ENCODE measurements at regions of chr2 and their contacts with region 1.

Region 1: GRCh38 chr2:66566726-66567399 is 131.9 kb downstream of the MEIS1 start:
- DNase-seq: no peak
- ATAC-seq: no peak
- H3K4me3 ChIP-seq: no peak overlapping the region
- H3K4me3 Mint-ChIP-seq: no peak overlapping the region
- H3K27ac ChIP-seq: no peak overlapping the region
- H3K27ac Mint-ChIP-seq: no peak overlapping the region
- H3K4me1 ChIP-seq: no peaks in the 10 kb centered on the region
- H3K4me1 Mint-ChIP-seq: peaks cover 0 to 6% of the 10 kb centered on the region in 2 donors
- H3K27me3 ChIP-seq: no peaks in the 10 kb centered on the region
- H3K27me3 Mint-ChIP-seq: peaks cover 4 to 11% of the 10 kb centered on the region in 2 donors
- CTCF ChIP-seq: no peak

Region 2: GRCh38 chr2:66547887-66548286 is 19.0 kb before region 1 on chr2:
- intact Hi-C with region 1: loop called (anchors 1 kb)
- DNase-seq: no peak
- ATAC-seq: no peak
- H3K4me3 ChIP-seq: no peak overlapping the region
- H3K4me3 Mint-ChIP-seq: no peak overlapping the region
- H3K27ac ChIP-seq: no peak overlapping the region
- H3K27ac Mint-ChIP-seq: no peak overlapping the region
- H3K4me1 ChIP-seq: no peaks in the 10 kb centered on the region
- H3K4me1 Mint-ChIP-seq: no peaks in the 10 kb centered on the region
- H3K27me3 ChIP-seq: no peaks in the 10 kb centered on the region
- H3K27me3 Mint-ChIP-seq: no peaks in the 10 kb centered on the region
- CTCF ChIP-seq: no peak